Heart left ventricle (tissue), 16 donors: ENCODE measurements at regions of chr21 and their contacts with region 1.

Region 1: GRCh38 chr21:36149788-36150711 is 6.6 kb upstream of the DOP1B start:
- DNase-seq: peak; percentile 48 to 68 (median 60)
- ATAC-seq: peak; percentile 68 to 90 (median 85)
- H3K4me3 ChIP-seq: peak overlapping the region in 1 of 12 donors; percentile 30
- H3K27ac ChIP-seq: peak overlapping the region; percentile 31 to 92 (median 74)
- H3K4me1 ChIP-seq: peaks cover 2 to 23% (median 14%) of the 10 kb centered on the region in 12 donors
- H3K27me3 ChIP-seq: no peaks in the 10 kb centered on the region
- CTCF ChIP-seq: no peak
- POLR2A ChIP-seq: no peak

Region 2: DNA sequence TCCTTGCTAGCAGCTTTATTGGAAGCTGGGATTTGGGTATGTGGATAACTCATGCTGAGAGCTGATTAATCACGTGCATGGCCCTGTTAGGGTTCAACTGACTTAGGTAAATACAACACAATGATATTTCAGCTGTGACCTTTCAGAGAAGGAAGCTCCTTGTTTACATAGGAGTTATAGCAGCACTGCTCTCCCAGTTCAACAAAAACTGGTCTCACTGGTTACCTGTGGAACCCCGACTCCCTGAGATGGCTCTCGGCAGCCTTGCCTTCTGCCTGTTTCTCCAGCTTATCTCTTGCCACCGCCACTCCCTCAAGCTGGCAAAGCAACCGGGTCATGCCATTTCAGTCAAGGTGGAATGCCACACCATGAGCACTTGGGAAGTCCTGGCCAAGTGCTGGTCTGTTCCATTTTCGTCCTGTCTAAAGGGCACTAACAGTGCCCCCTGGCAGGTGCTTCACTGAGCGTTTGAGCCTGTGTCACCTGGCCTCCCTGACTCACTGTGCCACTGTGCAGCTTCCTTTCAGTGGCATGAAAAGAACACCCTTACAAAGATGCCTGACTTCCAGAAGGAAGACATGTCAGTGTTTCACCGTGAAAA is 38.1 kb after region 1 on chr21:
- intact Hi-C with region 1: loop called in 1 of 10 experiments (anchors 5 kb)
- DNase-seq: peak; percentile 69 to 88 (median 70)
- ATAC-seq: peak; percentile 86 to 91 (median 90)
- H3K4me3 ChIP-seq: peak overlapping the region in 1 of 12 donors; percentile 13
- H3K27ac ChIP-seq: peak overlapping the region in 11 of 12 donors; percentile 32 to 80 (median 68)
- H3K4me1 ChIP-seq: peaks cover 0 to 29% (median 16%) of the 10 kb centered on the region in 12 donors
- H3K27me3 ChIP-seq: no peaks in the 10 kb centered on the region
- CTCF ChIP-seq: peak in 6 of 12 donors; percentile 17 to 38 (median 28)
- POLR2A ChIP-seq: no peak

Region 3: DNA sequence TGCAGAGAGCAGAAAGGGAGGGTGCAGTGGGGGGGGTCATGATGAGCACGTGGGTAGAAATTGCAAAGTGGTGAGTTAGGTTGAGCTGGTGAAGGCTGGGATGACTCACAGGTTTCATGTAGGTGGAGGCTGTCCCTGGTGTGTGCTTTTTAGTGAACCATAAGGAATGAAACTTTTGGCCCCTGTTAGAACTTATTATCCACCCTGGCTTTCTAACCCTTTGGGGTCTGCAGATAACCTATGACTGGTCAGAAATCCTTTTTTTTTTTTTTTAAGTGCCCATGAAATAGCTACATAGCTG is 53.5 kb after region 1 on chr21:
- intact Hi-C with region 1: loop called in 4 of 10 experiments (anchors 2 to 10 kb)
- DNase-seq: no peak
- ATAC-seq: peak in 3 of 4 donors; percentile 48 to 79 (median 54)
- H3K4me3 ChIP-seq: no peak overlapping the region
- H3K27ac ChIP-seq: no peak overlapping the region
- H3K4me1 ChIP-seq: peaks cover 0 to 15% (median 0%) of the 10 kb centered on the region in 12 donors
- H3K27me3 ChIP-seq: no peaks in the 10 kb centered on the region
- CTCF ChIP-seq: no peak
- POLR2A ChIP-seq: no peak

Region 4: GRCh38 chr21:36640721-36641244 is 490.7 kb after region 1 on chr21:
- intact Hi-C with region 1: no loop called
- DNase-seq: no peak
- ATAC-seq: no peak
- H3K4me3 ChIP-seq: no peak overlapping the region
- H3K27ac ChIP-seq: no peak overlapping the region
- H3K4me1 ChIP-seq: peaks cover 0 to 3% (median 0%) of the 10 kb centered on the region in 12 donors
- H3K27me3 ChIP-seq: peaks cover 0 to 10% (median 0%) of the 10 kb centered on the region in 9 donors
- CTCF ChIP-seq: no peak
- POLR2A ChIP-seq: no peak